Activated naive CD4-positive, alpha-beta T cell treated with anti-CD3 and anti-CD28 coated beads for 36 hours (primary cell): ENCODE measurements at regions of chr1 and their contacts with region 1.

Region 1: GRCh38 chr1:101288491-101288944 is 51.7 kb downstream of the S1PR1 start:
- DNase-seq: peak; percentile 84
- H3K4me3 Mint-ChIP-seq: no peak overlapping the region
- H3K27ac Mint-ChIP-seq: peak overlapping the region; percentile 72
- H3K4me1 Mint-ChIP-seq: peaks cover 84% of the 10 kb centered on the region
- H3K27me3 Mint-ChIP-seq: no peaks in the 10 kb centered on the region

Region 2: GRCh38 chr1:99820546-99820945 is 1468.0 kb before region 1 on chr1:
- CTCF ChIA-PET with region 1: no interaction called
- intact Hi-C with region 1: loop called (anchors 10 kb)
- DNase-seq: peak; percentile 54
- H3K4me3 Mint-ChIP-seq: no peak overlapping the region
- H3K27ac Mint-ChIP-seq: no peak overlapping the region
- H3K4me1 Mint-ChIP-seq: peaks cover 11% of the 10 kb centered on the region
- H3K27me3 Mint-ChIP-seq: no peaks in the 10 kb centered on the region

Region 3: DNA sequence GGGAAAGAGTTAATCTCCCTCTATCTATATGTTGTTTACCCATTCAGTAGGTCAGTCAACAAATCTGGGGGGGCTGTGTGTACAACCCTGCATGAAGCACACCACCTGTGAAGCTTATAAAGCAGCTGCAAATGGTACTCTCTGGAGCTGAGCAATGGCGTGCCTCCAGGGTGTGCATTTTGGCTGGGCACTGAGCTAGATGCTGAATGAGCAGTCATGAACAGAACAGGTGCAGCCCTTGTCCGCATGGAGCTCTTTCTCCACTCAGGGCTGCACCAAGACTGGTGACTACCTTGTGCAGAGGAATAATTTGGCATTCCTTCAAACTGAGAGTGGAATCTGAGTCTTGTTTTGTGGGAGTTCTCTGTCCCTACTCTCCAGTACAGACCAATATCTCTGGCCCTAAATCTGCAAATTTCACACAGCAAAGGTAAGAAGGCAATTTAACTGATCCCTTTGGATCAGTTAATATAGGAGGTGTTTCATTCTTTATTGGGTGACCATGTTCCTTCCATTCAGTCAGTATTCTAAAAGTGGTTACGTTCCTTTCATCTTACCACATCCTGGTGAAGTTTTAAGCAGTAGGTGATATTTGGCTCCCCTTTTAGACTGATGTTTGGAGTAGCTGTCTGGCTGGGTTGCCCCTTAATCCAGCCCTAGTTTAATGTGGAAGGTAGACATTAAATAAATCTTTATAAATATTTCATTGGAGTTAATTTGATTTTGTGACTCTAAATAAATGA is 674.5 kb before region 1 on chr1:
- CTCF ChIA-PET with region 1: no interaction called
- intact Hi-C with region 1: loop called (anchors 5 kb)
- DNase-seq: no peak
- H3K4me3 Mint-ChIP-seq: no peak overlapping the region
- H3K27ac Mint-ChIP-seq: no peak overlapping the region
- H3K4me1 Mint-ChIP-seq: peaks cover 16% of the 10 kb centered on the region
- H3K27me3 Mint-ChIP-seq: no peaks in the 10 kb centered on the region

Region 4: GRCh38 chr1:100955322-100955721 is 333.2 kb before region 1 on chr1:
- CTCF ChIA-PET with region 1: interaction called, 5 read pairs
- intact Hi-C with region 1: loop called (anchors 1 kb)
- DNase-seq: no peak
- H3K4me3 Mint-ChIP-seq: no peak overlapping the region
- H3K27ac Mint-ChIP-seq: peak overlapping the region; percentile 65
- H3K4me1 Mint-ChIP-seq: peaks cover 62% of the 10 kb centered on the region
- H3K27me3 Mint-ChIP-seq: no peaks in the 10 kb centered on the region

Region 5: GRCh38 chr1:101095576-101095975 is 192.9 kb before region 1 on chr1:
- CTCF ChIA-PET with region 1: no interaction called
- intact Hi-C with region 1: no loop called
- DNase-seq: no peak
- H3K4me3 Mint-ChIP-seq: no peak overlapping the region
- H3K27ac Mint-ChIP-seq: no peak overlapping the region
- H3K4me1 Mint-ChIP-seq: peaks cover 3% of the 10 kb centered on the region
- H3K27me3 Mint-ChIP-seq: no peaks in the 10 kb centered on the region

Region 6: DNA sequence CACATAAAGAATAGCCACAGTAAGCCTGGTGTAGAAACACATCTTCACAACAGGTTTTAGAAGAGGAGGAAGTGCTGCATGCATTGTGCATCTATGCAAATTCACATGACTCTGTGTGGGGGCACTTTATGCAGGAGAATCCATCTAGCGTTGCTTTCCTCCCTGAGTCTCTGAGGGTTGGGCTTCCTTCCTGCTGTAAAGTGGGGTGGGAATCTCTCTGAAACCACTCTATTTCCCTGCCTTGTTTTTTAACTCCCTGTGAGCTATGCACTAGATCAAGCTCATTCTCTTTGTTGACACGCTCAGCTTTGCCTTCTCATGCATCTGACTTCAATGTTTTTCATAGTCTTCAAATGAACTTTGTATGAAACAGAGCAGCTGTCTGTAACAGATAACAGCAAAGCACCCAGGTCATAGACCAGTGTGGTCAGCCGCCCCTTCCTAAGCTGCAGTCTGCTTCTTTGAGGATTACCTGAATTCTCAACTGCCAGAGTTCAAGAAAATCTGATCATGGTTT is 160.2 kb before region 1 on chr1:
- CTCF ChIA-PET with region 1: interaction called, 12 read pairs
- intact Hi-C with region 1: no loop called
- DNase-seq: peak; percentile 23
- H3K4me3 Mint-ChIP-seq: no peak overlapping the region
- H3K27ac Mint-ChIP-seq: peak overlapping the region; percentile 58
- H3K4me1 Mint-ChIP-seq: peaks cover 60% of the 10 kb centered on the region
- H3K27me3 Mint-ChIP-seq: no peaks in the 10 kb centered on the region

Region 7: DNA sequence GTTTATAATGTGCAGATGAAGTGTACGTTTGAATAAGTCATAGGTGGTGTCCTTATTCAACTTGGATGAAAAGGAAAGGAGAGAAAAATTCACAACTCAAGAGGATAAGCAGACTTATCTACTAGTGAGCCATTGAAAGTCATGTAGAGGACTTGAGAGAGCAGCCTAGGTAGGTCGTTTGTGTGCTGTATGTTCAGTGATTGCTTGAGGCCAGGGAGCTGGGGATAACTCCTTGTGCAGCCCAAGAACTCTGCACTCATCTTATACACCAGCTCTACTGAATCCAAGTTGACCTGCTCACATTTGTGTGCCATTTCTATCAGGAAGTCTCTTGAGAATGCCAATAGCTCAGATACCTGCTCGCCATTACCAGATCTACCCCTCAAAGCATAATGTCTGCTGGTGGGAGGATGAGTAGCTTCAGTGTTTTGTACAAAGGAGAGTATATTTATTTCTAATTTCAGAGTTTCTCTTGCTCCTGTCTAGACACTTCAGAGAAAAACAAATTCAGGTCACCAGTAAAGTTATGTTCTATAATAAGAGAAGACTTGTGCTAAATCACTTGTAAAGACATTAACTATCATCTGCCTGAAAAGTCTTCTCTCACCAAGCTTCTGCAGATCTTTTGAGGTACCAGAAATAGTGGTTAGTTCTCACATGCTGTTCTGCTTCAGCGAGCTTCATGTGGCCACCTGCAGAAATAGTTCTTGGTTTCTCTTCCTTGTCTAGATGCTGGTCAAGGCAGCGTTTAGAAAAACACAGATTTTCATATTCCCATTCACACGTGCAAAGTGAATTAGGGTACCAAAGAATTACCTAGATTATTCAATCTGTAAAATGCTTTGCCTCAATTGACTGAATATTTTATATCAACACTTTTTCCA is 40.9 kb before region 1 on chr1:
- CTCF ChIA-PET with region 1: interaction called, 38 read pairs
- intact Hi-C with region 1: no loop called
- DNase-seq: no peak
- H3K4me3 Mint-ChIP-seq: peak overlapping the region; percentile 5
- H3K27ac Mint-ChIP-seq: peak overlapping the region; percentile 55
- H3K4me1 Mint-ChIP-seq: peaks cover 65% of the 10 kb centered on the region
- H3K27me3 Mint-ChIP-seq: no peaks in the 10 kb centered on the region

Region 8: DNA sequence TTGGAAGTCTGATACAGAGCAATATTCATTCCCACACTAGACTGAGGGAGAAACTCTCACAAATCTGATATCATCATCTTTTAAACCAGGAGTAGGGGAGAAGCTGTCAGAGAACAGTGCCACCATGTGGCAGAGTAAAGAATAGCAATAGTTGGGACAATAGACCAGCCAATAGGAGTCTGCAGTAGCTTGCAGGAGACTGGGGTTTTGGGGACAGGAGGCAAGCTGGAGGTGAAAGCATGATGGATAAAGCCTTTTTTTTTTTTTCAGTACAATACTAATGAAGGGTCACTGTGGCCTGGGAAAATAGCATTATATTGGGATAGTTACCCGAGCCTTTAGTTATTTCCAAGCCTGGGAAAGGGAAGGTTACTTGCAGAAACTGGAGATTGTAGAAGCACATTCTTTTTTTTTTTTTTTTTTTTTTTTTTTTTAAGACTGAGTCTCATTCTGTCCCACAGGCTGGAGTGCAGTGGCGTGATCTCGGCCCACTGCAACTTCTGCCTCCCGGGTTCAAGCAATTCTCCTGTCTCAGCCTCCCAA is 69.0 kb after region 1 on chr1:
- CTCF ChIA-PET with region 1: interaction called, 19 read pairs
- intact Hi-C with region 1: loop called (anchors 1 kb)
- DNase-seq: peak; percentile 85
- H3K4me3 Mint-ChIP-seq: no peak overlapping the region
- H3K27ac Mint-ChIP-seq: no peak overlapping the region
- H3K4me1 Mint-ChIP-seq: peaks cover 7% of the 10 kb centered on the region
- H3K27me3 Mint-ChIP-seq: no peaks in the 10 kb centered on the region